ENCODE measurements at regions of chr6 and their contacts with region 1.

Region 1: DNA sequence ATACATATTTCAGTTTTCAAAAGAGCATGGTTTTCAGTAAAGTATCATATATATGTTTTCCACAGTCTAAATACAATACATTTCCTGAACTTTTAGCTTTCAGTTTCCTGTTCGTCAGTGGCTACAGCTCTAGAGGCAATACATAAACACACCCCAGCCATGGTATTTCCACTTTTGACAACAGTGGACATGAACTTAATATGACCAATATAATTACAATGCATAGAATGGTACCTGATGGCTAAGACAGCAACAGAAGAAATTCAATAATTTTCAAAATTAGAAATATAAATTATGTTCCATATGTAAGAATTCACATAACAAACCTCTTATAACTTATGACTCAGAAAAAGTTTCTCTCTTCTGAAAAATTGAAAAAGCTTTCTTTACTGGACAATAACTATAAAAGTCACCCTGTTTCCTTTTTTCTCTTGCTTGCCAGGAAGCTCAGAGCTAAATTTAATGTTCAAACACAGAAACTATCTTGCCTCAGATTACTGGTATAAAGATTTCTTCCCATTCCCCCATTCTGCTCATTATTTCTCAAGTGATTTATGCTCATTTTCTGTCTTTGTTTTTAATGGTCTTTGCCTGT is 19.2 kb downstream of the FKBP5 start:
- DNase-seq: no peak
- H3K4me3 Mint-ChIP-seq: peak overlapping the region; percentile 46
- H3K27ac Mint-ChIP-seq: peak overlapping the region; percentile 82
- H3K4me1 Mint-ChIP-seq: peaks cover 46% of the 10 kb centered on the region
- H3K27me3 Mint-ChIP-seq: no peaks in the 10 kb centered on the region

Region 2: GRCh38 chr6:35601331-35602132 is 68.0 kb before region 1 on chr6:
- intact Hi-C with region 1: loop called (anchors 5 kb)
- DNase-seq: peak; percentile 57
- H3K4me3 Mint-ChIP-seq: peak overlapping the region; percentile 80
- H3K27ac Mint-ChIP-seq: peak overlapping the region; percentile 89
- H3K4me1 Mint-ChIP-seq: peaks cover 62% of the 10 kb centered on the region
- H3K27me3 Mint-ChIP-seq: no peaks in the 10 kb centered on the region

Region 3: GRCh38 chr6:35654883-35655282 is 14.7 kb before region 1 on chr6:
- intact Hi-C with region 1: loop called (anchors 2 kb)
- DNase-seq: no peak
- H3K4me3 Mint-ChIP-seq: no peak overlapping the region
- H3K27ac Mint-ChIP-seq: no peak overlapping the region
- H3K4me1 Mint-ChIP-seq: no peaks in the 10 kb centered on the region
- H3K27me3 Mint-ChIP-seq: no peaks in the 10 kb centered on the region

Region 4: GRCh38 chr6:35681298-35681697 is 11.8 kb after region 1 on chr6:
- intact Hi-C with region 1: loop called (anchors 1 kb)
- DNase-seq: no peak
- H3K4me3 Mint-ChIP-seq: peak overlapping the region; percentile 8
- H3K27ac Mint-ChIP-seq: peak overlapping the region; percentile 72
- H3K4me1 Mint-ChIP-seq: peaks cover 39% of the 10 kb centered on the region
- H3K27me3 Mint-ChIP-seq: no peaks in the 10 kb centered on the region

Region 5: GRCh38 chr6:35710241-35710847 is 40.8 kb after region 1 on chr6:
- intact Hi-C with region 1: loop called (anchors 1 kb)
- DNase-seq: no peak
- H3K4me3 Mint-ChIP-seq: peak overlapping the region; percentile 50
- H3K27ac Mint-ChIP-seq: peak overlapping the region; percentile 82
- H3K4me1 Mint-ChIP-seq: peaks cover 50% of the 10 kb centered on the region
- H3K27me3 Mint-ChIP-seq: no peaks in the 10 kb centered on the region

Region 6: DNA sequence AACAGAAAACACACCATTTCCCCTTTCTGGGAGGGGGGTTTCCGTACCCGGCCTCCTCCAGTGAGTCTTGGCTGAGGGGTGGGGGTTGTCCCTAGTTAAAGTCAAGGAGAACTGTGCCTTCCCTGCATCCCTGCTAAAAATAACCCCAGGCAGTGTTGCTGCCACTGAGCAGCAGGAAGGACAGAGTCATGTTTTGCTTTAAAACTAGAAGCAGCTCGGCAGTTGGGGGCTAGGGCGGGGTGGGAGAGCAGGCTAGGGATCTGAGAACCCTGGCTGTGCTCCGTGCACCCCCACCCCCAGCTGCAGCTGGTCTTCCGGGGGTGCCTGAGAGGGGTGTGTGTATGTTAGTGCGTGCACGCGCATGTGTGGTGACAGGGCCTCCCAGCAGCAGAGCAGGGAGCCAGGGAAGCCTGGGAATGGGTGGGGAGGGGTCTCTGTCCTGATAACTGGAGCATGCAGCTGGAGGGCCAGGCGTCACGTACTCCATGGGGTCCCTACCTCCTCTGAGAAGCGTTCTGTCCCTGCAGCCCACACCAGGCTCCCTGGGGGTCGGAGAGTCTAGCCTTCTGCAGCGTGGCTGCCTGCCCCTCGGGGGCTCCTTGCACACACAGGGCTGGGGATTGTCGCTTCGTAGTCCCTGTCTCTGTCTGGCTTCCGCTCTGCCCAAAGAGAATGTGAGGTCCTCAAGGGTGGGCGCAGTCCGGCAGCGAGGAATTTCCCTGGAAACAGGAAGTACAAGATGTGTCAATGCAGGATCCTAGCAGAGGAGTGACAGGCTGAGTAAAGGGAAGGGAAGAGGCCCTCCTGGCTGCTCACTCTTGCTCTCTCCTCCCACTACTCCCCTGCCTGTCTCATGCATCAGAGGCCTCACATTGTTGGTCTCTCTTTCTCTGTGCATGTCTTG is 50.5 kb after region 1 on chr6:
- intact Hi-C with region 1: loop called (anchors 2 kb)
- DNase-seq: no peak
- H3K4me3 Mint-ChIP-seq: peak overlapping the region; percentile 55
- H3K27ac Mint-ChIP-seq: peak overlapping the region; percentile 86
- H3K4me1 Mint-ChIP-seq: peaks cover 62% of the 10 kb centered on the region
- H3K27me3 Mint-ChIP-seq: peaks cover 3% of the 10 kb centered on the region

Region 7: DNA sequence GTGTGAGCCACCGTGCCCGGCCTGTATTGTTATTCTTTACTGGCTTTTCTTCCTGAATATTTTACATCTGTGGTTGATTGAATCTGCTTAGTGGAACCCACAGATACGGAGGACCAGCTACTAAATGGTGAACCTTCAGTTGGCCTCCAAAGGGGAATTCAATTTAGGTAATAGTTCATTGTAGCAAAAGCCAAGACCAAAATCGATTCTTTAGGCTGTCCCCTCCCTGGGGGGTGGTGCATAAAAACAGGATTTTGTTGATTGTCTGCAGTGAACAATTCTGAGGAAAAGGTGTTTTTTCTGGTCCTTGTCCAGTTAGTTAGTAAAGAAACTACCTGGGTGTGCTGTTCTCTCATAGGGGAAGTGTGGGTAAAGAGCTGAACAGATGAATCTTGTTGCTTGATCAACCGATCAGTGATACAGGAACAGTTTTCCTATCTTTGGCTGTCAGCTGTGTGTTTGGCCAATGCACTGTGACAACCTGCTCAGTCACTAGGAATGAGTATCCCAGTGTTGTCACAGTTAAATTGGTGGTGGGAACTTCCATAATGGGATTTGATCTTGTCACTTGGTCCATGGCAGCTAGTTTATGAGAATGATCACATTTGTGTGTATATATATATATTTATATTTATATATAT is 155.1 kb after region 1 on chr6:
- intact Hi-C with region 1: no loop called
- DNase-seq: no peak
- H3K4me3 Mint-ChIP-seq: no peak overlapping the region
- H3K27ac Mint-ChIP-seq: no peak overlapping the region
- H3K4me1 Mint-ChIP-seq: no peaks in the 10 kb centered on the region
- H3K27me3 Mint-ChIP-seq: no peaks in the 10 kb centered on the region

Region 8: DNA sequence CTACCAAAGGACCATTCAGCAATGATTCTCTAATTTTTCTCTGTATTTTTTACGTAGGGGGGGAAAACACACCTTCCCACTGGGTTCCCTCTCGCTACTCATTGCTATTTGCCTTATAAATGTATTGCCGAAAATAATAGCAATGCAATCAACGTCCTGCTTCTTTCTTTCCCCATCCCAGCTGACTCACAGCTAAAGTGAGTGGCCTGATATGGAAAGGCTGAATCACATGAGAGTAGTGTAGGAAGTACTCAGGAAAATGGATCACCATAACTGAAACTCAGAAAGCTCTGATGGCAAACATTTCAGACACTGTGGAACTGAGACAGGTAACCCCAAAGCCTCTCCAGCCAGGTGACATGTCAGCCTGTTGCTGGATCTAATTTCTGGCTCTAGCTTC is 300.6 kb after region 1 on chr6:
- intact Hi-C with region 1: no loop called
- DNase-seq: no peak
- H3K4me3 Mint-ChIP-seq: no peak overlapping the region
- H3K27ac Mint-ChIP-seq: no peak overlapping the region
- H3K4me1 Mint-ChIP-seq: peaks cover 14% of the 10 kb centered on the region
- H3K27me3 Mint-ChIP-seq: peaks cover 7% of the 10 kb centered on the region

Region 9: GRCh38 chr6:35980991-35981660 is 311.6 kb after region 1 on chr6:
- intact Hi-C with region 1: no loop called
- DNase-seq: no peak
- H3K4me3 Mint-ChIP-seq: no peak overlapping the region
- H3K27ac Mint-ChIP-seq: no peak overlapping the region
- H3K4me1 Mint-ChIP-seq: no peaks in the 10 kb centered on the region
- H3K27me3 Mint-ChIP-seq: peaks cover 22% of the 10 kb centered on the region